ENCODE measurements at regions of chr1 and their contacts with region 1.

Region 1: DNA sequence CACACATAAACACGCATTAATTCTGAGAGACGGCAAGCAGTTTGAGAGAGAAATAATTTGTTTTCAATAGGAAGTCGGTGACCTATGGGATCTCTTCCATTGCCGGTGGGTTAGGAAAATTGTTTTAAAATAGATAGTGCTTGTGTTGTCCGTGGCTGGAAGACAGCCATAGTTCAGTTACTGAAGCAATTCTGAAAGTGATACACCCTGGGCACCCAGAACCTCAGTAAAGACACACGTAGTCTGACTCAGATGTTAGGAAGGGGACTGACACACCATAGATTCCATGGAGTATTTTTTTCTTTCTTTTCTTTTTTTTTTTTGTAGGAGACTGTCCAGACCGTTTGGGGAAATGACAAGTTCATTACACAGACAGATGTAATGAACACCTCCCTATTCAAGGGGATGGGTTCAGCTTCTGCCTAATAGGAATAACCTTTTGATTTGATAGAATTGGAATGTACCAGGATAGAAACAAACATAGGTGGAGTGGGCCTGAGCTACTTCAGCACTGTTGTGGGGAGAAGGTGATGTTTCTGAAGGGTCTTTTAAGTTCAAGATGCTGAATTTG is 1.6 kb downstream of the C1orf21 start:
- DNase-seq: peak in 1 of 2 experiments; percentile 19
- ATAC-seq: no peak
- H3K4me3 ChIP-seq: peak overlapping the region; percentile 79
- H3K27ac ChIP-seq: peak overlapping the region; percentile 76 to 88
- H3K4me1 ChIP-seq: peaks cover 18% of the 10 kb centered on the region
- CTCF ChIP-seq: no peak
- EP300 ChIP-seq: no peak
- POLR2A ChIP-seq: no peak
- RAD21 ChIP-seq: no peak

Region 2: DNA sequence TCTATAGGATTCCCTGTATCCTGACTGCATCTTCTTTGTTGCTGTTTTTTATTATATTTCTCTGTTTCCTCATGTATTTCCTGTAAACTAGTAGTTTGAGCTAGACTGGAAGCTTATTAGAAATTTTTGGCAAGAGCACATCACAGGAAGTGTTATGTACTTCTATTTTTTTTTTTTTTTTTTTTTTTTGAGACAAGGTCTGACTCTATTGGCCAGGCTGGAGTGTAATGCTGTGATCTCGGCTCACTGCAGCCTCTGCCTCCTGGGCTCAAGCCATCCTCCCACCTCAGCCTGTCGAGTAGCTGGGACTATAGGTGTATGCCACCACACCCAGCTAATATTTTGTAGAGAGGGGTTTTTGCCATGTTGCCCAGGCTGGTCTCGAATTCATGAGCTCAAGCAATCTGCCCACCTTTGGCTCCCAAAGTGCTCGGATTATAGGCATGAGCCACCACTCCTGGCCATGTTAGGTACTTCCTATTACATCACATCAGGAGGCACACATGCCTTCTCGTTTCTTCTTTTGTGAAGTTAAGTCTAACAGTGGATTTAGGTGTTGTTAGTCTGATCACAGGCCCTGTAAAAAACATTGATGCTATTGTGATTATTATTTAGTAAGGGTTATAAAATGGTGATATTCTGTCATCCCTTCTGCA is 10.9 kb after region 1 on chr1:
- CTCF ChIA-PET with region 1: interaction called, 13 read pairs
- POLR2A ChIA-PET with region 1: no interaction called
- DNase-seq: no peak
- ATAC-seq: peak in 1 of 2 experiments; percentile 64; a peak in 3 of 6 replicates
- H3K4me3 ChIP-seq: no peak overlapping the region
- H3K27ac ChIP-seq: peak overlapping the region in 1 of 2 experiments; percentile 27; a peak in 1 of 6 replicates
- H3K4me1 ChIP-seq: peaks cover 8% of the 10 kb centered on the region; the same call in 2 of the 3 replicates
- CTCF ChIP-seq: no peak
- EP300 ChIP-seq: no peak
- POLR2A ChIP-seq: no peak
- RAD21 ChIP-seq: no peak